ENCODE measurements at regions of chr17 and their contacts with region 1.

Region 1: DNA sequence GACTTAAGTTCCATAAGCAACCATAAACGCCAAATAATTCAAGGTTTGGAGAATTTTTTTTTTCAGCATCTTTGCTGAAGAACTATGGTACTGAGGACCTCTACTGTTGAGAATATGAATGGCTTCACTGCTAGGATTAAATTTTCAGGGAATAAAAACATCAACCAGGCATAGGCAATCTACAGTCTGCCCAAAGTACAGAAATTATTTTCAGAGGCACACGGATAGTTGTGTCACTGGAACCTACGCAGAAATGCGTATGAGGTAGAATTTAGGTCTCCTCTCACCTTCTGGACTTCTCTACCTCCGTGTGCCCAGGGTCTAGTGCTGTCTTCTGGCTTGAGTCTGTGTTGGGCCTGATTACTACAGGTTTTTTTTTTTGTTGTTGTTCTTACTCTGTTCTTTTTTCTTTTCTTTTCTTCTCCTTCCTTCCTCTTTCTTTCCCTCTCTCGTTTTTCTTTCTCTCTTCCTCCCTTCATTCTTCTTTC is 39.7 kb downstream of the NACA2 start:
- DNase-seq: peak; percentile 62
- ATAC-seq: peak; percentile 74
- H3K4me3 ChIP-seq: no peak overlapping the region; a peak in 1 of 6 replicates
- H3K27ac ChIP-seq: no peak overlapping the region
- H3K4me1 ChIP-seq: peaks cover 7% of the 10 kb centered on the region
- H3K27me3 ChIP-seq: no peaks in the 10 kb centered on the region; a peak in 1 of 5 replicates
- CTCF ChIP-seq: peak; percentile 83
- EP300 ChIP-seq: no peak
- POLR2A ChIP-seq: no peak
- RAD21 ChIP-seq: peak; percentile 84

Region 2: GRCh38 chr17:61461967-61462718 is 89.2 kb before region 1 on chr17:
- CTCF ChIA-PET with region 1: no interaction called
- POLR2A ChIA-PET with region 1: no interaction called
- in situ Hi-C with region 1: no loop called
- intact Hi-C with region 1: loop called (anchors 1 kb)
- DNase-seq: peak; percentile 56
- ATAC-seq: peak; percentile 45
- H3K4me3 ChIP-seq: peak overlapping the region; percentile 46 to 62 (median 61)
- H3K27ac ChIP-seq: peak overlapping the region; percentile 69
- H3K4me1 ChIP-seq: peaks cover 71% of the 10 kb centered on the region
- H3K27me3 ChIP-seq: no peaks in the 10 kb centered on the region
- CTCF ChIP-seq: no peak
- EP300 ChIP-seq: no peak
- POLR2A ChIP-seq: no peak
- RAD21 ChIP-seq: no peak

Region 3: GRCh38 chr17:61504697-61505349 is 46.5 kb before region 1 on chr17:
- CTCF ChIA-PET with region 1: no interaction called
- POLR2A ChIA-PET with region 1: no interaction called
- in situ Hi-C with region 1: no loop called
- intact Hi-C with region 1: loop called (anchors 2 kb)
- DNase-seq: peak; percentile 81
- ATAC-seq: peak; percentile 39; the same call in 2 of the 3 replicates
- H3K4me3 ChIP-seq: no peak overlapping the region
- H3K27ac ChIP-seq: no peak overlapping the region
- H3K4me1 ChIP-seq: peaks cover 27% of the 10 kb centered on the region
- H3K27me3 ChIP-seq: no peaks in the 10 kb centered on the region
- CTCF ChIP-seq: no peak
- EP300 ChIP-seq: 0 out of 4 replicates have a peak, but pooled peaks of 1 of the 2 experiments have one; percentile 22
- POLR2A ChIP-seq: no peak
- RAD21 ChIP-seq: no peak

Region 4: DNA sequence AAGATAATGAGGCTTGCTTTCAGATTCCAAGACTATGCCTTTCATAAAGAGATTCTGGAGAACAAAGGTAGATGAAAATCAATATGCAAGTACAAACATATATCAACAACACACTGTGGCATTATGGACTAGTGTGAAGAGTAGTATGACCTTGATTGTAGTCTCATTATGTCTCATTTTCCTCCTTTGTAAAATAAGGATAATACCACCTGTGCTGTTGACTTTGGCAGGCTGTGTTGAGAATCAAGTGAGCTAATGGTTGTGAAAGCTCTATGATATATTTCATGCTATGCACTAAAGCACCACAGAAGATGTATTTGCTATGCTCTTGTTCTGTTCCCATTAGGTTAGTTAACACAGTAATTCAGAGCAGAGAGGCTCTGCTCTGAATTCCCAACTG is 118.2 kb after region 1 on chr17:
- CTCF ChIA-PET with region 1: no interaction called
- POLR2A ChIA-PET with region 1: no interaction called
- in situ Hi-C with region 1: no loop called
- intact Hi-C with region 1: no loop called
- DNase-seq: no peak
- ATAC-seq: no peak
- H3K4me3 ChIP-seq: no peak overlapping the region
- H3K27ac ChIP-seq: no peak overlapping the region
- H3K4me1 ChIP-seq: peaks cover 14% of the 10 kb centered on the region
- H3K27me3 ChIP-seq: no peaks in the 10 kb centered on the region
- CTCF ChIP-seq: no peak
- EP300 ChIP-seq: no peak
- POLR2A ChIP-seq: no peak
- RAD21 ChIP-seq: no peak